Gastrocnemius medialis (tissue), 4 donors: ENCODE measurements at regions of chr15 and their contacts with region 1.

Region 1: DNA sequence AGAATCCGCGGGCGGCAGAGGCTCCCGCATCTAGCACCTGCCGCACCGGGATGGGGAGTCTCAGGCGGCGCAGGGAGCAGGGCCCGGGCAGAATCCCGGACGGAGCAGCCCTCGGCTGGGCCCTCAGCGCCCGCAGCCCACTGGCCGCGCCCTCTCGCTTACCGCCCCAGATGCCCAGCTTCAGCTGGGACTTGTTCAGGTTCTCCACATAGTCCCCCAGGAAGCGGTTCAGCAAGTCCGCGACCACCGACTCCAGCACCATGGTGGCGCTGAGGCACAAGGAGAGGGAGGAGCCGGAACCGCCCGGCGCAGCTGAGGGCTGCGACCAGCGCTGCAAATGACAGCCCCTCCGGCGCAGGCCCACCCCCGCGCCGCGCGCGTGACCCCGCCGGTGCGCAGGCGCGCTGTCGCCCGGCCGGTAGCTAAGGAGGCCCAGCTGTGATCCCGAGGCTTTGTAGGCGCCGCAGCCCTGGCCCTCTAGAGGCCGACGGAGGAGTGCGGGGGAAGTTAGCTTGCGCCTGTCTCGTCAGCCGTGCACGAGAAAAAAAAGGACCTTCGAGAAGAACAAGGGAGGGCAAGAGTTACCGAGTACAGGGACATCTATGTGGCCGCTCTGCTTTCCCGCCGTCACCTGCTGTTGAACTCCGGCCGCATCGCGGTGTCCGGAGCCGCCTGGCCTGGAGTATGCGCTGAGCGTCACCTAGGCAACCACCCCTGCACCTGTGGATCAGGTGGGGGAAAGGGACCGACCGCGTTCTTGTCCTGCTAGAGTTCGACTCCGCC is at the start of gene VPS13C:
- DNase-seq: peak; percentile 88 to 93
- ATAC-seq: peak; percentile 92 to 94
- H3K4me3 ChIP-seq: peak within 1 kb of the TSS; percentile 87 to 96 (median 90)
- H3K27ac ChIP-seq: peak within 1 kb of the TSS; percentile 92 to 97 (median 94)
- H3K4me1 ChIP-seq: peaks cover 7 to 17% of the 10 kb centered on the region in 2 donors
- H3K27me3 ChIP-seq: no peaks in the 10 kb centered on the region
- CTCF ChIP-seq: peak; percentile 78 to 91 (median 90)
- POLR2A ChIP-seq: peak; percentile 93 to 94
- total RNA-seq, gene VPS13C: 27.6 to 79.6 (median 30.5) TPM

Region 2: GRCh38 chr15:61974759-61975158 is 85.5 kb before region 1 on chr15:
- in situ Hi-C with region 1: loop called in 1 of 4 experiments (anchors 25 kb)
- intact Hi-C with region 1: loop called (anchors 2 kb)
- DNase-seq: peak in 1 of 2 donors; percentile 33
- ATAC-seq: peak; percentile 73 to 95
- H3K4me3 ChIP-seq: no peak overlapping the region
- H3K27ac ChIP-seq: peak overlapping the region; percentile 59 to 87 (median 80)
- H3K4me1 ChIP-seq: peaks cover 30 to 55% of the 10 kb centered on the region in 2 donors
- H3K27me3 ChIP-seq: no peaks in the 10 kb centered on the region
- CTCF ChIP-seq: no peak
- POLR2A ChIP-seq: peak in 1 of 2 donors; percentile 35

Region 3: GRCh38 chr15:62104401-62104800 is 44.1 kb after region 1 on chr15:
- in situ Hi-C with region 1: no loop called
- intact Hi-C with region 1: no loop called
- DNase-seq: no peak
- ATAC-seq: no peak
- H3K4me3 ChIP-seq: no peak overlapping the region
- H3K27ac ChIP-seq: no peak overlapping the region
- H3K4me1 ChIP-seq: peaks cover 3 to 5% of the 10 kb centered on the region in 2 donors
- H3K27me3 ChIP-seq: peaks cover 0 to under 1% (median 0%) of the 10 kb centered on the region in 3 donors
- CTCF ChIP-seq: no peak
- POLR2A ChIP-seq: no peak

Region 4: DNA sequence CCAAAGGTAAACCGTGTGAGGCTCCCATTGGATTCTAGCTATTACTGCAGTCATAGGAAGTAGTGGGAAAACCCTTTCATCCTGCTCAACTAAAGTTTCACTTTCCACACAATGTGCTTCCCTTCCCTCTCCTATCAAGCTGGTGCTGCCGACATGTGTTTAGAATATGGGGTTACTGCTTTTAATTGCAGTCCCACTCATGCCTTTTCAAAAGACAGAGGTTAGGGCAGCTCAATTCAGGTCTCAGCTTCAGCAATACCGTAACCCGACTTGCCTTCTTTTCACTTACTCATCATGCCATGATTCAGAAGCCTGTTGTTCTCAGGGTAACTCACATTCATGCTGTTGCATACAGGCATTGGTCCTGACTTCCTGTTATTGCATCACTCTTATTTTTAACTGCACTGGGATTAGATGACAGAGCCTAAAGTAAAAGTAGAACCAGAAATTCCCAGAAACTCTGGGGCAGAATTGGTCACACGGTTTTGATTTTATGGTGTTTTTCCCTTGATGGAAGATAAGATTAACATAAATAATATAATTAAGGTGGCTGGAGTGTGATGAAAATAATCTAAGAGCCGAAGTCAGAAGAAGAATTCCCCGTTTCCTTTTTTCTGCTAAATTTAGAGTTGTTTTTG is 59.0 kb after region 1 on chr15:
- in situ Hi-C with region 1: no loop called
- intact Hi-C with region 1: loop called (anchors 10 kb)
- DNase-seq: peak; percentile 36 to 49
- ATAC-seq: peak; percentile 94 to 95
- H3K4me3 ChIP-seq: peak overlapping the region; percentile 10 to 54 (median 28)
- H3K27ac ChIP-seq: peak overlapping the region; percentile 71 to 80 (median 79)
- H3K4me1 ChIP-seq: peaks cover 18 to 20% of the 10 kb centered on the region in 2 donors
- H3K27me3 ChIP-seq: no peaks in the 10 kb centered on the region
- CTCF ChIP-seq: no peak
- POLR2A ChIP-seq: peak in 1 of 2 donors; percentile 12

Region 5: DNA sequence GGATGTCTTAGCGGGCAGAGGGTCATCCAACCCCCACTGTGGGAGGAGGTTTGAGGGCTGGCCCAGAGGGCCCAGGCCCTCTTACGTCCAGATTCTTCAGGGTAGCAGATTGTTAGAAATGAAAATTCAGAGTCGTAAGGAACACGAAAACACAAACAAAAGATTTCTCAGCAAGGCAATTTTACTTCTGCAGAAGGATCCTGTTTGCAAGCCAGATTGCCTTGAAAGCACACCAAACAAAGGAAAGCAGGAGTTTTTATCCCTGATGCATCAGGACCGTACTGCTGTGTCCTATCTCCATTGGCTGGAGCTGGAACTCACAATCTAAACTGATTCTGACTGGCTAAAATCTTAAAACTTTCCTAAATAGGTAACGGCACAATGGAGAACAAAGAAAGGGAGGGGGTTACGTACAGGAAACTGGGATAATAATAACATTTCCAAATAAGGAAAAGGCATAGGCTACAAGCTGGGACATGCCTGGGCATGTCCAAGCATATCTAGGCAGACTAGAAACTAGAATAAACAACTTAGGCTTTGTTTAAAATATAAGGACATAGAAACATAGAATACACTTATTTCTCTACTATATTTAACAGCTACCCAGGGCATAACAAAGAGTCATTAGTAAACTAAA is 202.1 kb after region 1 on chr15:
- in situ Hi-C with region 1: no loop called
- intact Hi-C with region 1: no loop called
- DNase-seq: no peak
- ATAC-seq: no peak
- H3K4me3 ChIP-seq: no peak overlapping the region
- H3K27ac ChIP-seq: no peak overlapping the region
- H3K4me1 ChIP-seq: no peaks in the 10 kb centered on the region
- H3K27me3 ChIP-seq: no peaks in the 10 kb centered on the region
- CTCF ChIP-seq: no peak
- POLR2A ChIP-seq: no peak

Region 6: DNA sequence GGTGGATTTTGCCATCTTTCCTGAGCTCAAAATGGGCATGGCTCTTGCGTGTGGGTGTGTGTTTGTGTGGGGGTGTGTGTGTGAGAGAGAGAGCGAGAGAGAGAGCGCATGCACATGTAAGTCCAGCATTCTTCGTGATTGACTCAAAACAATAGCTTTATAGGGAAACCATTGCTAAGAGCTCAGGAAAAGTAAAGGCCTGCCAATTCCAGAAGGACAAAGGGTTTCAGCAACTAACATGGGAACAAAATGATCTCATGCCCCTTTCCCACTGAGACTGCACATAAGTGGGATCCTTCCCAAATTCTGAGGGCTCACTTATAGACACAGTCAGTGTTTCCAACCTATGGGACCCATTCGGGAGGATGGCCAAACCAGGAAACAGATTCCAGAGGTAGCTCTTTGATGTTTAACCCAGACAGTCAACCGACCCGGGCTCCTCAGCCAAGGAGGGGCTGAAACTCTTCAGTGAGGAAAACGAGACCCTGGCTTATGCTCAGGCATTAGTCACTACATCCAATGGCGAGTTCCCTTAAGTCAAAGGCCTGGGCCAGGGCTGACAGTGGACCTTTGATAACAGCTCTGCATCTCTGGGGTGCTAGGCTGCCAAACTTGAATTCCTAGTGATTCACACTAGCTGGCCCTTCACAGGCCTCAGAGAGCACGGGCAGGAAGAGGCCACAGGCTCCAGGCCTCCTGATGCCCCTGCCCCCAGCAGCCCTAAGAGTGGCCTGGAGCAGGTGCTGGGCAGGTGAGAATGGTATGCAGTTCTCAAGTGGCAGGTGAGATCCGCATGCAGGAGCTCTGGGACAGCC is 409.8 kb after region 1 on chr15:
- in situ Hi-C with region 1: no loop called
- intact Hi-C with region 1: loop called (anchors 5 kb)
- DNase-seq: peak in 1 of 2 donors; percentile 66
- ATAC-seq: peak in 1 of 2 donors; percentile 10
- H3K4me3 ChIP-seq: no peak overlapping the region
- H3K27ac ChIP-seq: peak overlapping the region; percentile 56 to 92 (median 65)
- H3K4me1 ChIP-seq: peaks cover 71 to 77% of the 10 kb centered on the region in 2 donors
- H3K27me3 ChIP-seq: no peaks in the 10 kb centered on the region
- CTCF ChIP-seq: no peak
- POLR2A ChIP-seq: no peak